ENCODE measurements at regions of chr17 and their contacts with region 1.

Region 1: GRCh38 chr17:49132699-49133364 is at the start of gene B4GALNT2:
- DNase-seq: peak; percentile 79
- H3K4me3 ChIP-seq: peak within 1 kb of the TSS; percentile 58
- H3K4me3 Mint-ChIP-seq: peak within 1 kb of the TSS; percentile 84
- H3K27ac Mint-ChIP-seq: peak within 1 kb of the TSS; percentile 50
- H3K4me1 ChIP-seq: peaks cover 6% of the 10 kb centered on the region; the same call in 1 of the 2 replicates
- H3K4me1 Mint-ChIP-seq: peaks cover 8% of the 10 kb centered on the region
- H3K27me3 ChIP-seq: peaks cover 2% of the 10 kb centered on the region; the same call in 1 of the 2 replicates
- H3K27me3 Mint-ChIP-seq: no peaks in the 10 kb centered on the region
- CTCF ChIP-seq: no peak
- total RNA-seq, gene B4GALNT2: 1.1 and 1.3 TPM in 2 replicates

Region 2: GRCh38 chr17:49069585-49070273 is 63.1 kb before region 1 on chr17:
- CTCF ChIA-PET with region 1: no interaction called
- POLR2A ChIA-PET with region 1: no interaction called
- intact Hi-C with region 1: loop called (anchors 5 kb)
- DNase-seq: no peak
- H3K4me3 ChIP-seq: no peak overlapping the region
- H3K4me3 Mint-ChIP-seq: no peak overlapping the region
- H3K27ac Mint-ChIP-seq: no peak overlapping the region
- H3K4me1 ChIP-seq: peaks cover 23% of the 10 kb centered on the region
- H3K4me1 Mint-ChIP-seq: peaks cover 14% of the 10 kb centered on the region
- H3K27me3 ChIP-seq: no peaks in the 10 kb centered on the region
- H3K27me3 Mint-ChIP-seq: no peaks in the 10 kb centered on the region
- CTCF ChIP-seq: no peak